Activated T-helper 1 cell treated with anti-CD3 and anti-CD28 coated beads, Interleukin-12 subunit alpha, Interleukin-12 subunit beta, Interleukin-2, Interleukin-4 antibody, amounts not matched to agents 30 ng/mL and 10 ng/mL and 1 ng/mL, durations not matched to agents 14 hours and 24 hours and 36 hours (primary cell): ENCODE measurements at regions of chr12 and their contacts with region 1.

Region 1: DNA sequence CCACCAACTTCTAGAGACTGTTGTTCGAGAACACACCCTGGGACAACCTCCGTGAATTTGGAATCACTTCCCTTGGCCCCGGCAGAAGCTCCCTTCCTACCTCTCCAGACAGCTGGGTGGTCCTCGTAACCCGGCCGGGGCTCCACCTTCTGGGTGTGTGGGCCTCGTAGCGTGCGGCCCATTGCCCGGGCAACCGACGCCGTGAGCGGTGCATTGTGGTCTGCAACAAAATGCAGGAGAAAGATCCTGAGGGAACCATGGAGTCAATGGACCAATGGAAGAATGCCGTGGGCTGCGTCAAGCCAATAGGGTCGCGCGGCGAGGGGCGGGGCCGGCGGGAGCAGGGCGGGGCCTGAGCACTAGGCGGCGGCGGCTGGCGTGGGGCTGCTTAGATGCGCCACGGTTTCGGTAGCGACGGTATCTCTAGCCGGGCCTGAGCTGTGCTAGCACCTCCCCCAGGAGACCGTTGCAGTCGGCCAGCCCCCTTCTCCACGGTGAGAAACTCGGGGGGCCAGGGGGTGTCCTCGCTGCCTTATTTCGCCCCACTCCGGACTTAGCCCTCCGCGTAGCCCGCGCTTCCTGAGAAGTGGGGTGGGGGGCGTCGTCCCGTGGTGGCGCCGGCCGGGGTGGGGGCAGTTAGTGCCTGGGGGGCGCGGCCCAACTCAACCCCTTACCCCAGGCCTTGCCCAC is at the start of gene DYNLL1:
- DNase-seq: peak; percentile 98
- H3K4me3 Mint-ChIP-seq: peak within 1 kb of the TSS; percentile 99
- H3K27ac Mint-ChIP-seq: peak within 1 kb of the TSS; percentile 89
- H3K4me1 Mint-ChIP-seq: peaks cover 37% of the 10 kb centered on the region
- H3K27me3 Mint-ChIP-seq: no peaks in the 10 kb centered on the region
- total RNA-seq, gene DYNLL1: 341 and 356 TPM in 2 replicates

Region 2: DNA sequence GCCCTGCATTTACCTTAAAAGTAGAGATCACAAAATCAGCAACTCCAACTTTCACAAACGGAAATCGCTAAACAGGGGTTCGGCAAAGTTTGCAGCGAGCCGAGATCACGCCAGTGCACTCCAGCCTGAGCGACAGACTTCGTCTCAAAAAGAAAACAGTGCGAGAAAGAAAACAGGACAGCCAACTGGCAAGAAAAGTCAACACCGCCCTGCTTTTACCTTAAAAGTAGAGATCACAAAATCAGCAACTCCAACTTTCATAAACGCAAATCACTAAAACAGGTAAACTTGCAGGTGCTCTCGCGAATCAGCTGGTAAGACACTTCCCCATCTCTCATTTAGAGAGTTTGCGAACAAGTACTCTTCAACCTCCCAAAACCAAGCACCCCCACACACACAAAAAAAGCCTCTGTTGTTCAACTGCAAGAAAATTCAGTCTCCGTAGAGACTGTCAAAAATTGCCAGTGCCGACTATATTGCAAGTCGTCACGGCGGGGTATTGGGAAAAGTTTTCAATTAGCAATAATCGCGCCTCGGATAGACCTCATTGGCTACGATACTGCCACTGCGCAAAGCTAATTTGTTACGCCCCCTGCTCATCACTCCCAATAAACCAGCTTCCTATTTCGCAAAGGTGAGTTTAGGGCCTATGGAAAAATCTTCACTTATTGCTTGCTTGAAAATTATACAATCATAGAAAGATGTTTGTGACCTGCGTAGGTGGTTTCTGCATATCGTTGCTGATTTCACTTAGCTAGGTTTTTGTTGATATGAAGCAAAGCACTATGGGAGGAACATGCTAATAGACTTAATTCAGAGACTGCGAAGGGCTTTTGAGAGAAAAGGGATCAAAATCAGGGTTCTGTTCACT is 203.0 kb before region 1 on chr12 and contains the start of gene RNU4-1:
- intact Hi-C with region 1: loop called (anchors 5 kb)
- DNase-seq: peak; percentile 74
- H3K4me3 Mint-ChIP-seq: no peak within 1 kb of the TSS
- H3K27ac Mint-ChIP-seq: no peak within 1 kb of the TSS
- H3K4me1 Mint-ChIP-seq: no peaks in the 10 kb centered on the region
- H3K27me3 Mint-ChIP-seq: peaks cover 12% of the 10 kb centered on the region
- total RNA-seq, gene RNU4-1: 2,369 and 3,474 TPM in 2 replicates

Region 3: DNA sequence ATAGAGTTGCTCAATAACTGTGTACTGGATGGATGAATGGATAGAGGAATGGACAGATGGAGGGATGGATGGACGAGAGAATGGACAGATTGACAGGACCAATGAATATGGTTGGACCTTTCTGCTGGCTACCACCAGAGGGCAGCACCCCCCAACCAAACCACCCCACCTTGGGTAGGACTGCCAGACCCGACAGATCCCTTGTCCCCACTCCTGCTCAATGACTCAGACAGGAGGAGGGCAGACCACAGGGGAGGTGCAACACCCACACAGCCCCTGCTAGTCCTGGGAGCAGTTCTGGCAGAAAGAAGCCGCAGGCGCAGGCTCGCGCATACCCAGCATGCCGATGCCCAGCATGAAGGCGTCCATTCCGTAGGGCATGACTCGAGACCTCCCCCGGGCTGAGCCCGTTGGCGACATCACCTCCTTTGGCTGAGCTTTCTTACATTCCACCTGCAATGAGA is 139.3 kb before region 1 on chr12:
- intact Hi-C with region 1: loop called (anchors 1 kb)
- DNase-seq: peak; percentile 49
- H3K4me3 Mint-ChIP-seq: no peak overlapping the region
- H3K27ac Mint-ChIP-seq: no peak overlapping the region
- H3K4me1 Mint-ChIP-seq: no peaks in the 10 kb centered on the region
- H3K27me3 Mint-ChIP-seq: peaks cover 27% of the 10 kb centered on the region

Region 4: GRCh38 chr12:120445911-120446843 is 49.7 kb before region 1 on chr12 and contains the starts of genes GATC and TRIAP1:
- intact Hi-C with region 1: loop called (anchors 2 kb)
- DNase-seq: peak; percentile 87
- H3K4me3 Mint-ChIP-seq: peak within 1 kb of the TSS; percentile 97
- H3K27ac Mint-ChIP-seq: peak within 1 kb of the TSS; percentile 99
- H3K4me1 Mint-ChIP-seq: peaks cover 24% of the 10 kb centered on the region
- H3K27me3 Mint-ChIP-seq: no peaks in the 10 kb centered on the region
- total RNA-seq, gene GATC: 34.0 and 38.8 TPM in 2 replicates
- total RNA-seq, gene TRIAP1: 50.7 and 55.7 TPM in 2 replicates

Region 5: GRCh38 chr12:120514002-120514401 is 18.1 kb after region 1 on chr12:
- intact Hi-C with region 1: no loop called
- DNase-seq: no peak
- H3K4me3 Mint-ChIP-seq: no peak overlapping the region
- H3K27ac Mint-ChIP-seq: no peak overlapping the region
- H3K4me1 Mint-ChIP-seq: no peaks in the 10 kb centered on the region
- H3K27me3 Mint-ChIP-seq: no peaks in the 10 kb centered on the region

Region 6: GRCh38 chr12:120528861-120529525 is 33.1 kb after region 1 on chr12 and contains the start of gene COQ5:
- intact Hi-C with region 1: loop called (anchors 1 kb)
- DNase-seq: peak; percentile 75
- H3K4me3 Mint-ChIP-seq: peak within 1 kb of the TSS; percentile 100
- H3K27ac Mint-ChIP-seq: peak within 1 kb of the TSS; percentile 99
- H3K4me1 Mint-ChIP-seq: peaks cover 28% of the 10 kb centered on the region
- H3K27me3 Mint-ChIP-seq: no peaks in the 10 kb centered on the region
- total RNA-seq, gene COQ5: 27.8 and 29.8 TPM in 2 replicates

Region 7: GRCh38 chr12:120710031-120710804 is 214.3 kb after region 1 on chr12 and contains the start of gene UNC119B:
- intact Hi-C with region 1: loop called (anchors 1 kb)
- DNase-seq: peak; percentile 71
- H3K4me3 Mint-ChIP-seq: peak within 1 kb of the TSS; percentile 91
- H3K27ac Mint-ChIP-seq: peak within 1 kb of the TSS; percentile 89
- H3K4me1 Mint-ChIP-seq: peaks cover 37% of the 10 kb centered on the region
- H3K27me3 Mint-ChIP-seq: no peaks in the 10 kb centered on the region
- total RNA-seq, gene UNC119B: 24.2 and 24.6 TPM in 2 replicates